Posterior vena cava (tissue), 2 donors: ENCODE measurements at regions of chr15 and their contacts with region 1.

Region 1: GRCh38 chr15:80970018-80970658 is 19.5 kb downstream of the MESD start:
- DNase-seq: no peak

Region 2: GRCh38 chr15:80455668-80456442 is 514.3 kb before region 1 on chr15:
- intact Hi-C with region 1: loop called (anchors 5 to 10 kb)
- DNase-seq: no peak

Region 3: DNA sequence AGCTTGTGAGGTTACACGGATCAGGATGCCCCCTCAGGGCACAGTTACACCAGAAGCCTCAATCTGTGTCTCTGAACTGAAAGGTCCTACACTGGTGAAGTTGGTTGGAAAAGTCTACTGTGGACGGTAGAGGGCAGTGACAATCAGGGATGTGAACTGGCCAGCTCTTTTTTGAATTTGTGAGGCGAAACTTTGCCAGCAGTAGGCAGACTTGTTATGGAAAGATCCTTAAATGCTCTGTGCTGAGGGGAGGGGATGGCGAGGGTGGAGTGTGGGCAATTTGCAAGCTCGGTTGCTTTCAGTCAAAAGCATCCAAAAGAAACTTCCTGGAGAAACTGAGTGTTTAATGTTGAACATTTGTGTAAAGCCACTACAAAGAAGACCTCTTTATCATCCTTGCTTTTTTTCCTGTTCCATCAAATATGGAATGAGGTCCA is 402.4 kb before region 1 on chr15:
- intact Hi-C with region 1: loop called in 1 of 2 experiments (anchors 10 kb)
- DNase-seq: no peak

Region 4: GRCh38 chr15:80659375-80659774 is 310.8 kb before region 1 on chr15:
- intact Hi-C with region 1: loop called in 1 of 2 experiments (anchors 10 kb)
- DNase-seq: no peak

Region 5: GRCh38 chr15:80915472-80915871 is 54.7 kb before region 1 on chr15:
- intact Hi-C with region 1: no loop called
- DNase-seq: no peak

Region 6: GRCh38 chr15:81604713-81605112 is 634.6 kb after region 1 on chr15:
- intact Hi-C with region 1: no loop called
- DNase-seq: no peak